Left colon (tissue), 2 donors: ENCODE measurements at regions of chr4 and their contacts with region 1.

Region 1: GRCh38 chr4:118740869-118741268 is 55.7 kb downstream of the METTL14 start:
- DNase-seq: no peak
- ATAC-seq: no peak

Region 2: DNA sequence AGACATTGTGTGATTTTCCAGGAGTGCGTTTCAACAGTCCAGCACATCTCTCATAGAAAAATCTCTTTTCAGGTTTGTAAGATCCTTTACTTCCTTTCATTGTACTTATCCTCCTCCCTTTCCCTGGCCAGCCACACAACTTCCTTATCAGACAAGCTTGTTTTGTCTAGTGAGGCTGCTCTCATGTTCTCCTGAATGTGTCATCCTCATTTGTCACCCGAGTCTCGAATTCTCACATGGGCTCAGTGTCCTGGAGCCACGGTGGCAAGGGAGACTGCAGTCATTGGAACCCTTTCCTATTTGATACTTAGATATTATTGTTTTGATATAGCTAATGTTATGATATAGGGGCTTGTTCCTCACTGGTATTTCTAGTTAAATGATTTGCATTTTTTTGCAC is 164.7 kb after region 1 on chr4:
- intact Hi-C with region 1: loop called in 1 of 2 experiments (anchors 10 kb)
- DNase-seq: no peak
- ATAC-seq: no peak